OCI-LY7 (cell line): ENCODE measurements at regions of chr11 and their contacts with region 1.

Region 1: GRCh38 chr11:107457558-107458271 is at the start of gene CWF19L2:
- DNase-seq: peak; percentile 98
- H3K4me3 ChIP-seq: peak within 1 kb of the TSS; percentile 92
- H3K27ac ChIP-seq: peak within 1 kb of the TSS; percentile 77
- H3K4me1 ChIP-seq: peaks cover 16% of the 10 kb centered on the region
- CTCF ChIP-seq: 0 out of 2 replicates have a peak, but pooled peaks have one; percentile 11
- total RNA-seq, gene CWF19L2: 13.4 and 20.6 TPM in 2 replicates

Region 2: DNA sequence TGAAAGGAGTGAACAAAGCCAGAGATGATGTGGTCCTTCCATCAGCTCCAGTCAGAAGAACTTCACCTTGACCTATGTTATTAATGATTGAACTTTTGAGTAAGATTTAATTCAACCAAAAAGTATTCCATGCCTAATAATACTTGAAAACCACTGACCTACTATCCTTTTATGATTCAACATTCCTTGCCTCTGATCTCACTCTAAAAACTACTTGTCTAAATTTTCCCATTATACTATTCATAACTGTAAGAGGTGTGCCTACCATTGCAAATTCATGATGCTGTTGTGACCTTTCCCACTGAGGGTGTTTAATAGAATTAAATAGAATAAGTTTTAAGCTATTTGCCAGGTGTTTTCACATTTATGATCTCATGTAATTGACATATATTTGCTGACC is 274.7 kb before region 1 on chr11:
- CTCF ChIA-PET with region 1: no interaction called
- POLR2A ChIA-PET with region 1: no interaction called
- intact Hi-C with region 1: no loop called
- DNase-seq: no peak
- H3K4me3 ChIP-seq: no peak overlapping the region
- H3K27ac ChIP-seq: no peak overlapping the region
- H3K4me1 ChIP-seq: no peaks in the 10 kb centered on the region
- CTCF ChIP-seq: no peak

Region 3: GRCh38 chr11:107446822-107447431 is 10.8 kb before region 1 on chr11:
- CTCF ChIA-PET with region 1: no interaction called
- POLR2A ChIA-PET with region 1: interaction called, 10 read pairs
- intact Hi-C with region 1: no loop called
- DNase-seq: no peak
- H3K4me3 ChIP-seq: no peak overlapping the region
- H3K27ac ChIP-seq: no peak overlapping the region
- H3K4me1 ChIP-seq: no peaks in the 10 kb centered on the region
- CTCF ChIP-seq: no peak